ENCODE measurements at regions of chr2 and their contacts with region 1.

Region 1: DNA sequence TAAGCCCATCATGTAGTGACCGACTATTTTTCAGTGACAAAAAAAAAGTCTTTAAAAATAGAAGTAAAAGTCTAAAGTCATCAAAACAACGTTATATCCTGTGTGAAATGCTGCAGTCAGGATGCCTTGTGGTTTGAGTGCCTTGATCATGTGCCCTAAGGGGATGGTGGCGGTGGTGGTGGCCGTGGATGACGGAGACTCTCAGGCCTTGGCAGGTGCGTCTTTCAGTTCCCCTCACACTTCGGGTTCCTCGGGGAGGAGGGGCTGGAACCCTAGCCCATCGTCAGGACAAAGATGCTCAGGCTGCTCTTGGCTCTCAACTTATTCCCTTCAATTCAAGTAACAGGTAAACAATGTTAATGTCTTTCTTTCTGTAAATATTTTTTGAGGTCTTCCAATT is at the start of gene CD28:
- DNase-seq: peak; percentile 88
- H3K4me3 Mint-ChIP-seq: peak within 1 kb of the TSS; percentile 89
- H3K27ac Mint-ChIP-seq: peak within 1 kb of the TSS; percentile 100
- H3K4me1 Mint-ChIP-seq: peaks cover 57% of the 10 kb centered on the region
- H3K27me3 Mint-ChIP-seq: no peaks in the 10 kb centered on the region
- total RNA-seq, gene CD28: 53.6 and 59.3 TPM in 2 replicates

Region 2: DNA sequence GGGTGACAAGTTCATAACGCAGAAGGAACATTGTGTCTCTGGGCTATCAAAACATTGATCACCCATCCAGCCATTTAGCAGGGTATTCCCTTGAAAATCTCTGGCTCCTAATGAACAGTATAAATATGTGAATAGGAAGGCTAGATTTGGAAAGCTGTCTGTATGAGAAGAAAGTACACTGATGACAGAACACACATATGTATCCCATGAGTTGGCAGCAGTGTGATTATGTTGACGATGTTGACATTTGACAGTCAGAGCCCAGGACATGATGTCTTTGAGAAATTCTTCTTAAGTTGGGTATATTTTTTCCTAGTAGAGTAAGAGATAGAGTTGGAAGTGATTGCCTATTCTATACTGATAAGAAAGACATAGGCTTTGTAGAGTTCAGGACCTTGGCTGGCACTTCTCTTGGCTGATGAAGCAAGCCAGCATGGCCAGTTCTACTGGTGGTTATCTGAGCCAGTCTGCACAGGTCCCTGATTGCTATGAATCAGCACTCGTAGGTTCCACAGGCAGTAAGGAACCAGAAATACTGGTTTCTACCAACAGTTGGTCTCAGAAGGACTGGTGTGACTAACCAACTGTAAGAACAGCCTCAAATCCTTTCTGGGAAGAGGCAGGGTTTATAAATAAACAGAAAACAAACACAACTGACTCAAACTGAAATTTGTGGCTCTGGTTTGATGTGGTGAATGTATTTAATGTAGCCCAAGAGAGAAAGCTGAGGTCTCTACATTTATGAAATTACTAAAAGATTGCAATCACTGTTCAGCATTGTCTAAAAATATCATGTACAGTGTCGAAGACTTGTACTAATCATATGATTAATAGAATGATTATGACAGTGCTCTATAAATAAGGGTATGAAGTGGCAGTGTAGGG is 127.4 kb before region 1 on chr2:
- intact Hi-C with region 1: loop called (anchors 1 kb)
- DNase-seq: peak; percentile 54
- H3K4me3 Mint-ChIP-seq: no peak overlapping the region
- H3K27ac Mint-ChIP-seq: peak overlapping the region; percentile 67
- H3K4me1 Mint-ChIP-seq: peaks cover 38% of the 10 kb centered on the region
- H3K27me3 Mint-ChIP-seq: peaks cover 41% of the 10 kb centered on the region

Region 3: DNA sequence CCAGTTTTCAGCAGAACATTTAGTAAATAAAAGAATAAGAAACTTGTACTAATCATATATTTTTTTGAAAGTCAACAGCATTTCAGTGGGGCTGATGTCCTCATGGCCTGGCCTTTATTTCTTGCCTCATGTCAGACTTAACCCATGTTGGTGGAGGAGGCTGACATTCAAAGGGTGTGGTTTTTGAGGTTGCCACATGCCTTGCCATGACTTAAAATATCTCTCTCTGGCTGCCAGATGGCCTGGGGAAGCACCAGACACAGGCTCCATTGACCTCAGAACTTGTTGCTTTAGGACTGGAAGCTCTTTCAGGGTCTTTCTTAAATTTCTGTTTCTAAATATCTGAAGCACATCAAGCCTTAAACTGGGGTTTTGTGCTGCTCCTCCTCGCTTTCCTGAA is 32.5 kb before region 1 on chr2:
- intact Hi-C with region 1: loop called (anchors 2 kb)
- DNase-seq: peak; percentile 46
- H3K4me3 Mint-ChIP-seq: peak overlapping the region; percentile 51
- H3K27ac Mint-ChIP-seq: peak overlapping the region; percentile 85
- H3K4me1 Mint-ChIP-seq: peaks cover 47% of the 10 kb centered on the region
- H3K27me3 Mint-ChIP-seq: no peaks in the 10 kb centered on the region

Region 4: DNA sequence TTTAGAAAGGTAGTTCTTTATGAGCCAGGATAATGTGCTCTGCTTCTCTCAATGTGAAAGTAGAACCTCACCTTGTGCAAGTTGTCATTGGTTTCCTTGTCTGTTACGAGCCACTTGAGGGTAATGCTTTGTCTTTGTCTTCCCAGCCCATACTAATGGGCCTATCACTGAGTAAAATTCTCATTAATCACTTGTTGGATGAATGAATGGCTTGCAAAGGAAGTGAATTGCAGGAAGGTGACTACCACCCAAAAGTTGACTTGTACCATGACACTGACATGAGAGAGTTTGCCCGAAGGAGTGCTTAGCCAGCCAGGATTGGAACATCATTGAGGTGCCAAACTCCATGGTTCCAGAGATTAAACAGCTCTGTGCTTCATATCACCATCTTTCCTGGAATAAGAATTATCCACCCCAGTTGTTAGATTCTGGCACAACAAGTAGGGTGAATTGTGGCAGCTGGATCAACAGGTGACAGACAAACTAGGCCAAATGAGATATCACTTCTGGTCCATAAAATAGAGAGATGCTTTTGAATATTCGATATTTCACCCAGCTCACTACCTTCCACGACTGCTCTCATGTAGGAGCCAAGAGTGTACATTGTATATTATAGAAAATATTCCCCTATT is 20.5 kb before region 1 on chr2:
- intact Hi-C with region 1: no loop called
- DNase-seq: no peak
- H3K4me3 Mint-ChIP-seq: no peak overlapping the region
- H3K27ac Mint-ChIP-seq: no peak overlapping the region
- H3K4me1 Mint-ChIP-seq: peaks cover 42% of the 10 kb centered on the region
- H3K27me3 Mint-ChIP-seq: no peaks in the 10 kb centered on the region

Region 5: GRCh38 chr2:203730076-203730729 is 23.8 kb after region 1 on chr2:
- intact Hi-C with region 1: loop called (anchors 1 kb)
- DNase-seq: no peak
- H3K4me3 Mint-ChIP-seq: peak overlapping the region; percentile 1
- H3K27ac Mint-ChIP-seq: peak overlapping the region; percentile 83
- H3K4me1 Mint-ChIP-seq: peaks cover 75% of the 10 kb centered on the region
- H3K27me3 Mint-ChIP-seq: no peaks in the 10 kb centered on the region

Region 6: GRCh38 chr2:203782262-203782976 is 76.0 kb after region 1 on chr2:
- intact Hi-C with region 1: loop called (anchors 1 kb)
- DNase-seq: peak; percentile 53
- H3K4me3 Mint-ChIP-seq: no peak overlapping the region
- H3K27ac Mint-ChIP-seq: peak overlapping the region; percentile 74
- H3K4me1 Mint-ChIP-seq: peaks cover 42% of the 10 kb centered on the region
- H3K27me3 Mint-ChIP-seq: no peaks in the 10 kb centered on the region

Region 7: DNA sequence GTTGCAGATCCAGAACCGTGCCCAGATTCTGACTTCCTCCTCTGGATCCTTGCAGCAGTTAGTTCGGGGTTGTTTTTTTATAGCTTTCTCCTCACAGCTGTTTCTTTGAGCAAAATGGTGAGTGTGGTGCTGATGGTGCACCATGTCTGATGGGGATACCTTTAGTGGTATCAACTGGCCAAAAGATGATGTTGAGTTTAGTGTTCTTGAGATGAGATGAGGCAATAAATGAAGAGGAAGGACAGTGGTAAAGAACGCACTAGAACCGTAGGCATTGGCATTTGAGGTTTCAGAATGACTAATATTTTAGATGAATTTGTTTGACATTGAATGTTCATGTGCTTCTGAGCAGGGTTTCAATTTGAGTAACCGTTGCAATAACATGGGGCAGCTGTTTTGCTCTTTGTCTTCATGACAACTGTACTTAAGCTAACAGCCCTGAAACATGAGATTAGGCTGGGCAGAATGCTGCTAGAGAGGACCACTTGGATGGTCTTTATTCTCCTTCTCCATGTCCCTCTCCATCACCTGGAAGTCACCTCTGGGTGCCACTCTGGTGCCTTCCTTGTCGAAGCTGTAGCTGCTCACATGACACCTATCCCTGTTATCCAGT is 165.1 kb after region 1 on chr2:
- intact Hi-C with region 1: loop called (anchors 2 kb)
- DNase-seq: peak; percentile 60
- H3K4me3 Mint-ChIP-seq: peak overlapping the region; percentile 96
- H3K27ac Mint-ChIP-seq: peak overlapping the region; percentile 95
- H3K4me1 Mint-ChIP-seq: peaks cover 57% of the 10 kb centered on the region
- H3K27me3 Mint-ChIP-seq: no peaks in the 10 kb centered on the region

Measured in activated T-helper 2 cell treated with anti-CD3 and anti-CD28 coated beads, Interferon-gamma antibody, Interleukin-2, Interleukin-4, amounts not matched to agents 10 μg/mL and 5 μg/mL and 100 μg/mL, durations not matched to agents 14 hours and 24 hours and 36 hours (primary cell).